ENCODE measurements at regions of chr17 and their contacts with region 1.

Region 1: DNA sequence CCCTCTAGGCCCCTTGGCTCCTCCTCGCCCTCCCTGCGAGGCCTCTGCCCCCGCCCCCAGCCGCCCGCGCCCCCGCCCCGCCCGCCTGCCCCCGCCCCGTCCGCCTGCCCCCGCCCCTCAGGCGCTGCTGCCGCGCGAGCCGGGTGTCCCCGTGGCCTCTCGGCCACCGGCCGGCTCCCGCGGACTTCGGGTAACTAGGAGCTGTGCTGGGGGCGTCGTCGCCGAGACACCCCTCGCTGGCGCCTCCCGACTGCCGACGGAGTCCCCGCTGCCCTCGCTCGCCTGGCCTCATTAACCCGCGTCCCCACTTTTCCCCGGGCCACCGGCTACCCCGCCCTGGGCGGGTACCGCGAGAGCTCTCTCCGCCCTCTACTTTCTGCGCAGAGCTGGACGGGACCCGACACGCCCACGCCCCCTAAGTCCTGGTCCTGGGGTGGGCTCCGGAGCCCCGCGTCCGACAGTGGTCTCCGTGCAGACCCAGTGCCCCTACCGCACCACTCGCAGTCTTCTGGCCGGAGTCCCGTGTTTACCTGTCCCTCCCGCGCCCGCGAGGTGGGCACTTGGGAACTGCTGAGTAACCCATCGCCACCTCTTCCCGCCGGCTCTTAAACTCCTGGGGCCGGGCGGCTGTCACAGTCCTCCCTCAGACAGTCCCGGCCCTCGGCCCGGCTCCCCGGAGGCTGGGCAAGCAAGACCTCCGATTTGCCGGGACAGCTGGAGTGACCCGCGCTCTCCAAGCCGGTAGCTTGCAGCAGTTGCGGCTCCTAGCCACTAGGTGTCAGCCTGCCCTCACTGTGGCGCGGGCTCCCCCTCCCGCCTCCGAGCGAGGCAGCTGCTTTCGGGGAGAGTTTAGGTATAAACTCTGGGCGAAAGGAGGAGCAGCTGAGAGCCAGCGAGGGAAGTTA is at the start of gene TLCD1:
- DNase-seq: peak; percentile 84 to 94 (median 90)
- H3K4me3 ChIP-seq: peak within 1 kb of the TSS; percentile 45 to 99 (median 85)
- H3K27ac ChIP-seq: peak within 1 kb of the TSS in 53 of 59 donors; percentile 7 to 98 (median 75)
- H3K27me3 ChIP-seq: no peaks in the 10 kb centered on the region
- CTCF ChIP-seq: peak; percentile 87 to 100 (median 99)
- total RNA-seq, gene TLCD1: 2.0 to 22.8 (median 6.6) TPM

Region 2: DNA sequence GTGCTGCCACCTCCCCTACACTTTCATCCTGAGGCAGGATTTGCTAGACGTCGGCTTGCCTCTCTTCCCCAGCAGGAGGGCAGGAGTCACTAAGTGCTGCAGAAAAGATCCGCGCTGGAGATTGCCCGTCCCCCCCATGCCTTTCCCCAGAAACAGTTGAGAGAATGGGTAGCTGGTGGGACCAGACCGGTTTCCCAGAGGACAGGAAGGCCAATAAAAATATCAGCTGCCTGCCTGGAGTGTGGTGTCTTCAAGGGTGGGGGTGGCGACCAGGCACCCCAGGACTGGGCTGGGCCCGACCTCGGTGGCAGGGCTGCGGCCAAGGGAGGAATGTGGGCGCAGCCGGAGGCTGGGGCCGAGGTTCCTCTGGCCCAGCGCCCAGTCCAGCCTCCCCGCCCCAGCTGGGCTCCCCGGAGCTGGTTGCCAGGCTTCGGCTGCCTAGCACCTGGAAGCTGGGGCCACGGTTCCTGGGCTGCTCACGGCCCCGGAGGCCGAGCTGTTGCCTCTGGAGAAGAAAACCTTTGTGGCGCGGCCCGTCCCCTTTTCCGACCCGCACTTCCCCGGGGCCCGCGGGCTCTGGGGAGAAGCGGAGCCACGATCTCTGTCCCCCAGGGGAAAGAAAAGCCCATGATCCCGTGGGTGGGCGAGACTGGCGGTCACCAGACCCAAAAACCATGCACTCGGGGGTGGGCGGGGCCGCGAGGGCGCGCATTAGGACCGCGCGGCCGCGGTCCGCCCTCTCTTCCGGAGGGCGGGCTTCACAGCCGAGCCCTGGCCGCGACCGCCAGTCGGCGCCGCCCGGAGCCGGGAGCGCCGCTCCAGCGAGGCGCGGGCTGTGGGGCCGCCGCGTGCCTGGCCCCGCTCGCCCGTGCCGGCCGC is 17.0 kb after region 1 on chr17 and contains the start of gene TRAF4:
- intact Hi-C with region 1: loop called (anchors 1 to 2 kb)
- DNase-seq: peak in 7 of 10 donors; percentile 55 to 82 (median 68)
- H3K4me3 ChIP-seq: peak within 1 kb of the TSS; percentile 57 to 98 (median 83)
- H3K27ac ChIP-seq: peak within 1 kb of the TSS; percentile 74 to 100 (median 98)
- H3K27me3 ChIP-seq: no peaks in the 10 kb centered on the region
- CTCF ChIP-seq: peak in 26 of 56 donors; percentile 6 to 57 (median 26)
- total RNA-seq, gene TRAF4: 16.6 to 92.5 (median 39.5) TPM

Region 3: DNA sequence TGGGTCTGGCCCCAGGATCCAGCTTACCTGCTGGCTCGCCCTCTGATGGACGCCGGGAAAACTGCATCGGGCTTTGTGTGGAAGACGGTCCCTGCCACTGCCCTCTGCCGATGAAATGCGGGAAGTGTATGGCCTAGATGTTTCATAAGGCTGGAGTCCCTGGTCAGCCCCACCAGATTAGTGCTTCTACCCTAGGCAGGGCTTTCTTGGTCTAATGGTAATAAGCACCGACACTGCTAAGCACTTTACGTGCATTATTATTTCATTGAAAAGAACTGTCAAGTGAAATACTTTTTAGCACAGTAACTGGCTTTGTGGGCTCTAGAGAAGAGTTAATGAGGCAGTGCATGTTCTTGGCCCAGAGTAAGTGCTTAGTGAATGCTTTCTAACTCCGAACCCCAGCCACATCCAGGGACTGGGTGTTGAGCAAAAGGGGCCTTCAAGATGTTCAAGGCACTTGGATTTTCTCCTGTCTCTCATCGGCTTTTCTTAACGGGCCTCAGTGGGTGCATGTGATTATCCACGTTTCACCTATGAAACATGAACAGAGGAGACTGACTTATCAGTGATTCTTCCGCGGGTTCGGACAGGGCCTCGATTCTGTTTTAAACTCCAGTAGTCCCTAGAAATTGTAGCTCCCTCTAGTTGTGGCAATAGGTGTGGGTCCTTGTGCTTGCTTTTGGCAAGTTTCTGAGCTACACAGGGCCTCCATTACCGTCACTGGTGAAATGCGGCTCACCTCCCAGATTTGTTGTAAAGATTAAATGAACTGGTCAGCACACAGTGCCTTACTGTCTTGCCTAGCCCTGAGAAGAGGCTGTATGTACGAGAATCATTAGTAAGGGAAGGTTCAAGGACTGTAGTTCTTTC is 23.9 kb after region 1 on chr17:
- intact Hi-C with region 1: loop called (anchors 1 kb)
- DNase-seq: peak; percentile 92 to 97 (median 95)
- H3K4me3 ChIP-seq: peak overlapping the region in 20 of 59 donors; percentile 1 to 80 (median 23)
- H3K27ac ChIP-seq: peak overlapping the region in 58 of 59 donors; percentile 16 to 100 (median 98)
- H3K27me3 ChIP-seq: no peaks in the 10 kb centered on the region
- CTCF ChIP-seq: peak; percentile 92 to 100 (median 100)

Region 4: DNA sequence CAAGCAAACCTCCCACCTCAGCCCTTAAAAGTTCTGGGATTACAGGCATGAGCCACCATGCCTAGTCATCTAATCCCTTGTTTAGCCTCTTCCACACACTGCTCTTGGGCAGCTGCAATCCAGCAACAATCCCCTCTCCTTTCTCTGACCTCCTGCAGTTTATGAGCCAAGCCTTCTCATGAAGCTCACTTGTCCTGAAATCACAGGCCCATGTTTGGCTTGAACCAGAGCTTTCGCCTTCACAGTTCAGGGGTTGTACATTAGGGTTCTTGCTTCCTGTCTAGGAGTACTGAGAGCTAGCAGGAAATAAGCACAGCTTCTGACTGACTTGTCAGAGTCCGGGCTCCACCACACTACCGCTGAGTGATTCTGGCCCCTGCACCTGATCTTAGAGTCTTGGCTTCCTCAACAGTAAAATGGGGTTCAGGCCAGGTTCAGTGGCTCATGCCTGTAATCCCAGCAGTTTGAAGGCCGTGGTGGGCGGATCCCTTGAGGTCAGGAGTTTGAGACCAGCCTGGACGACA is 144.6 kb after region 1 on chr17:
- intact Hi-C with region 1: no loop called
- DNase-seq: no peak
- H3K4me3 ChIP-seq: no peak overlapping the region
- H3K27ac ChIP-seq: no peak overlapping the region
- H3K27me3 ChIP-seq: no peaks in the 10 kb centered on the region
- CTCF ChIP-seq: no peak

Region 5: DNA sequence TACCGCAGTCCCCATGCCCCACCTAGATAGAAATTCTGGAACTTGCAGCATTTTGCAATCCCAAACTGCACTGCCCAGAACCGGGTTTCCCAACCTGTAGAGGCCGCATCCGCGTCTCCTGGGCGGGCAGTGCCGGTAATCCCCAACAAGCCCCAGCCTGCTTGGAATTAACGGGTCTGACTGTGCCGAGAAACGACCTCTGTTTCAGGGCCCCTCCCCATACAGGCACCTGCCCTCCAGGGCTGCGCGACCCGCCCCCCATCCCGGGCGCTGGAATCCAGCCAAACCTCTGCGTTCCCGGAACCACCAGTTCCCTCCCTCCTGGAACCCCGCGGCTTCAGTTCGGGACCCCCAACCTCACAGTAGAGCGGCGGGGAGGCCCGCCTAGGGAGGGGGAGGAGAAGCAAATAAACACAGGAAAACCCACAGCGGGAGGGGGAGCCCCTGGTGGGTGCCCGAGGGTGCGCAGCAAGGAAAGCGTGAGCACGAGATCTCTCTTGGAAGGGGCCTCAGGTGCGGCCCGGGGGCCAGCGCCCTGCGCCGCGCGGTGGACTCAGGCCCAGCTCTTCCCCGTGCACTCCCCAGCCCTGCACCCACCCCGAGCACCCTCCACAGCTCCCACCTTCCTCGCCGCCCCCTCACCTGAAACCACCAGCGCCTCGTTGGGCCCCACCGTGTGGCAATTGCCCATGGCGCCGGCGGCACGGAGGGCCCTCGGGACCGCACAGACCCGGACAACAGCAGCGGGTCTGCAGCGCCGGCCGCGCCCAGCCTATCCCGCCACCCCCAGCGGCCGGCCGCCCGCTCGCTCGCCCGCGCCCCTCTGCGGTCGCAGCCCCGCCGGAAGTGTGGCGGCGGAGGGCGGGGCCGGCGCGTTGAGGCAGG is 170.6 kb after region 1 on chr17 and contains the start of gene FLOT2:
- intact Hi-C with region 1: loop called (anchors 5 kb)
- DNase-seq: peak in 8 of 10 donors; percentile 31 to 75 (median 55)
- H3K4me3 ChIP-seq: peak within 1 kb of the TSS; percentile 41 to 97 (median 88)
- H3K27ac ChIP-seq: peak within 1 kb of the TSS; percentile 59 to 99 (median 95)
- H3K27me3 ChIP-seq: no peaks in the 10 kb centered on the region
- CTCF ChIP-seq: peak in 34 of 56 donors; percentile 6 to 56 (median 28)
- total RNA-seq, gene FLOT2: 50.7 to 182 (median 108) TPM

Region 6: DNA sequence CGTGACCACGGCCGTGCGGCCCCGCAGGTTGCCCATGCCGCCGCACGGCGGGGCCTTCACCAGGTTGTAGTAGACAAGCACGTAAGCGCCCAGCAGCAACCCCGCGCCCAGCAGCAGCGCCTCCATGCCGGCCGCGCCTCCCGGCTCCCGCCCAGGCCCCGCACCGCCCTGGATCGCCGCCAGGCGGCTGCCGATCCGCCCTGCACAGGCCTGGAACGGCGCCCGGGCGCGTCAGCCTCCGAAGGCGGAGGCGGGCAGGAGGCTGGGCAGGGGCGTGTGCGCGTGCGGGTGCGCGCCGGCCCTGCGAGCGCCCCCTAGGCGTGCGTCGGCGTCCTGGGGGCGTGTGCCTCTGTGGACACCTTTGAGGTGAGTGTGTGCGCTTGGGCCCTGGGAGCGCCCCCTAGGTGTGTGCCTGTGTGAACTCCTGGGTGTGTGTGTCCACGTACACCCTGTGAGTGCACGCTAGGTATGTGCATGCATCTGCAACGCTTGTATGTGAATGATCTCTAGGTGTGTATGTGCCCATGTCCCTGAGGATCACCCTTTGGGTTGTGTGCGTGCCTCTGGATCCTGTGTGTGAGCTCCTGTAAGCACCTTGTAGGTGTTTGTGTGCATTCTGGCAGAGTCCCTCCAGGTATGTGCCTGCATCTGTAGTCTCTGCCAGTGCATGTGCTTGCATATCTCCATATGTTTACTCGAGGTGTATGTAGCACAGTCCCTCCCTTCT is 176.5 kb after region 1 on chr17 and contains the start of gene DHRS13:
- intact Hi-C with region 1: loop called (anchors 5 kb)
- DNase-seq: peak; percentile 58 to 89 (median 78)
- H3K4me3 ChIP-seq: peak within 1 kb of the TSS; percentile 59 to 88 (median 77)
- H3K27ac ChIP-seq: peak within 1 kb of the TSS in 58 of 59 donors; percentile 5 to 92 (median 78)
- H3K27me3 ChIP-seq: no peaks in the 10 kb centered on the region
- CTCF ChIP-seq: peak; percentile 42 to 98 (median 85)
- total RNA-seq, gene DHRS13: 5.9 to 22.5 (median 10.1) TPM

Region 7: GRCh38 chr17:28951991-28952975 is 225.8 kb after region 1 on chr17:
- intact Hi-C with region 1: loop called (anchors 2 kb)
- DNase-seq: peak; percentile 97 to 100 (median 98)
- H3K4me3 ChIP-seq: peak overlapping the region; percentile 65 to 99 (median 86)
- H3K27ac ChIP-seq: peak overlapping the region; percentile 93 to 100 (median 100)
- H3K27me3 ChIP-seq: no peaks in the 10 kb centered on the region
- CTCF ChIP-seq: peak in 38 of 56 donors; percentile 7 to 55 (median 28)

Region 8: DNA sequence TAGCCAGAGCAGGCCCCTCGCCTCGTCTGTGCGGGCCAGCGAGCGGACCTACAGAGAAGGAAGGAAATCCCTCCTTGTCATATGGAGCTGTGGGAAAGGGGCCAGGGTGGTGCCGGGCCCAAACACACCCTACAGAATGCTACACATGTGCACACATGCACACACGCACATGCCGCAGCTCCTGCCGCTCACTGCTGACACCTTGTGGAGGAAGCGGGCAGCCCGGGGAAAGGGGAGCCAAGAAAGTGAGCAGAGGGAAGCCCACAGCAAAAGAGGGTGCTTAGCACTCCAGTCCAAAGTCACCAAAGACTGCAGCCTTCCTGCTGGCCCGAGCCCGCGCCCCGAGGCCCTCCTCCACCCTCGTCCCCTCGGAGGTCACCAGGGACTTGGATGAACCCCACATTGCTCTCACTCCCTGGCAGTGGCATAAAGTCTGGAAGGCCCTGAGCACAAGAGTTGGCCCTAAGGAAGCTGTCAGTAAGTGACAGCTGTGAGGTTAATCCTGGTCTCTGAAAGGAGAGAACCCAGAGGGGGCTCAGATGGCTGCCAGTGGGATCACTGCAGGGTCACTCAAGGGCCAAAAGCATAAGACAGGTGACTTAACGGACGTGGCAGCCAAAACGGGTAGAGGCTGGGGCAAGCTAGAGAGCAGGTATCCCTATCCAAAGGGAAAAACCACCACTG is 385.5 kb after region 1 on chr17:
- intact Hi-C with region 1: loop called in 1 of 2 experiments (anchors 5 kb)
- DNase-seq: peak; percentile 62 to 84 (median 72)
- H3K4me3 ChIP-seq: no peak overlapping the region
- H3K27ac ChIP-seq: peak overlapping the region in 55 of 59 donors; percentile 10 to 84 (median 66)
- H3K27me3 ChIP-seq: no peaks in the 10 kb centered on the region
- CTCF ChIP-seq: peak; percentile 64 to 95 (median 88)

Measured in dorsolateral prefrontal cortex (tissue), 120 donors.